AG04450 (cell line): ENCODE measurements at regions of chr1 and their contacts with region 1.

Region 1: DNA sequence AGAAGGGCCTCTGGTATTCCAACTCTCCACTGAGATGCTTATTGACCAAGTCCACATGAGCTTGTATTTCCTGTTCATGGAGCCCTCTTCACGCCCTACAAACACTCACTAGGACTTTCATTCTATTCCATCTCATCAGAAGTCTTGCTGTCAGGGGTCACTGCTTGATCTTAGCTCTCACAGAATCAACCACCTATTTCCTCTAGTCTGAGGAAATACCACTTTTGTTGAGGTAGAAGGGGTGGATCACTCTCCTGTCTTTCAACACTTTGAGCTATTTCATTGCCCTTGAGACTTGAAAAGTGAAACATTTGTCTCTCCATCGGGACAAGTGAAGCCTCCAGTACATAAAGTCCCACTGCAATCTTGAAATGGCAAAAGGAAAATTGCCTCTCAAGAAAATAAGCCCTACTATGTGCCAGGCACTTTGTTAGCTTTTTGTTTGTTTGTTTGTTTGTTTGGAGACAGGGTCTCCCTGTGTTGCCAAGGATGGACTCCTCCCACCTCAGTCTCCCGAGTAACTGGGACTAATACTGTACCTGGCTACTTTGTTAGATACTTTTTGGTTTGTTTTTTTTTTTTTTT is 19.8 kb upstream of the FAM110D start:
- DNase-seq: no peak
- H3K4me3 ChIP-seq: no peak overlapping the region
- H3K27ac ChIP-seq: no peak overlapping the region
- H3K27me3 ChIP-seq: no peaks in the 10 kb centered on the region
- CTCF ChIP-seq: no peak

Region 2: GRCh38 chr1:26257222-26257621 is 118.2 kb after region 1 on chr1:
- CTCF ChIA-PET with region 1: interaction called, 10 read pairs
- POLR2A ChIA-PET with region 1: no interaction called
- DNase-seq: no peak
- H3K4me3 ChIP-seq: no peak overlapping the region
- H3K27ac ChIP-seq: no peak overlapping the region
- H3K27me3 ChIP-seq: no peaks in the 10 kb centered on the region
- CTCF ChIP-seq: no peak